Body of pancreas (tissue), 4 donors: ENCODE measurements at regions of chr10 and their contacts with region 1.

Region 1: GRCh38 chr10:95246579-95247051 is 44.2 kb downstream of the PDLIM1 start:
- DNase-seq: peak; percentile 72 to 85 (median 78)
- ATAC-seq: peak; percentile 54
- H3K4me3 ChIP-seq: no peak overlapping the region
- H3K27ac ChIP-seq: peak overlapping the region in 2 of 4 donors; percentile 15 to 41
- H3K4me1 ChIP-seq: peaks cover 17% of the 10 kb centered on the region
- H3K27me3 ChIP-seq: no peaks in the 10 kb centered on the region
- CTCF ChIP-seq: peak; percentile 60 to 79 (median 74)
- POLR2A ChIP-seq: no peak

Region 2: DNA sequence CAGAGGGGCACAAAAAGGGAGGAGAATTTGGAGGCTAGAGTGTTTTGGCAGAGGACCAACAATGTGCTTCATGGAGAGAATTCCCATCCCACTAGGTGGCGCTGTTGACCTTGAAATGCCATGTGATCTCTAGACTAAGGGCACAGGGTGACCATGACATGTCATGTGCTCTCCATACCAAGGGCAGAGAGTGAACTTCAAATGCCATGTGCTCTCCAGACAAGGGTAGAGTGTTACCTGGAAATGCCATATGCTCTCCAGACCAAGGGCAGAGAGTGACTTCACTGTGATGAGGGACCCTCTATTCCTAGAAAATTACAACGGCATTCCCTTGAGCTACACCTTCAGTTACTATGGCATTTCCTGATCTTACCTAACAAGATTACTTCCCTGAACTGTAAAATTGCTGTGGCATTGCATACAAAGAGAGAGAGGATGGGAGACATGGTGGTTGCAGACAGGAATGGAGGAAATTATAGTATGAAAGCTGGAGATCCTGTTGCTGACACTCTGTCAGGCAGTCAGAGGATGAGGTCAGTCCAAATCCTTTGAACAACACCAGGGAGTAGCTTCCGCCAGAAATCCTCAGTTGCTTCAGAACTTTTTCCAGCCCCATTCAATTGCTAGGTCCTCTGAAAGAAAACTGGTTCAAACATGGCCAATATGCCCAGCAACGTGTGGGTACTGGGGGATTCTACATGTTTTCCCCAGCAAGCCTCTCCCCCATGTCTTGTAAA is 113.4 kb before region 1 on chr10:
- intact Hi-C with region 1: loop called (anchors 10 kb)
- DNase-seq: peak; percentile 88 to 92 (median 91)
- ATAC-seq: peak; percentile 96
- H3K4me3 ChIP-seq: no peak overlapping the region
- H3K27ac ChIP-seq: no peak overlapping the region
- H3K4me1 ChIP-seq: peaks cover 10% of the 10 kb centered on the region
- H3K27me3 ChIP-seq: no peaks in the 10 kb centered on the region
- CTCF ChIP-seq: peak; percentile 59 to 96 (median 91)
- POLR2A ChIP-seq: no peak

Region 3: GRCh38 chr10:95183271-95184230 is 63.1 kb before region 1 on chr10:
- intact Hi-C with region 1: loop called (anchors 10 kb)
- DNase-seq: peak; percentile 91 to 96 (median 91)
- ATAC-seq: peak; percentile 95
- H3K4me3 ChIP-seq: peak overlapping the region; percentile 9 to 30
- H3K27ac ChIP-seq: peak overlapping the region; percentile 76 to 99 (median 96)
- H3K4me1 ChIP-seq: peaks cover 24% of the 10 kb centered on the region
- H3K27me3 ChIP-seq: no peaks in the 10 kb centered on the region
- CTCF ChIP-seq: peak; percentile 89 to 99 (median 98)
- POLR2A ChIP-seq: peak; percentile 80 to 96 (median 90)

Region 4: GRCh38 chr10:95363303-95363912 is 116.8 kb after region 1 on chr10:
- intact Hi-C with region 1: loop called (anchors 5 kb)
- DNase-seq: peak; percentile 55 to 71 (median 58)
- ATAC-seq: peak; percentile 81
- H3K4me3 ChIP-seq: no peak overlapping the region
- H3K27ac ChIP-seq: no peak overlapping the region
- H3K4me1 ChIP-seq: peaks cover 10% of the 10 kb centered on the region
- H3K27me3 ChIP-seq: no peaks in the 10 kb centered on the region
- CTCF ChIP-seq: peak; percentile 73 to 91 (median 89)
- POLR2A ChIP-seq: no peak

Region 5: GRCh38 chr10:95474228-95475002 is 227.8 kb after region 1 on chr10:
- intact Hi-C with region 1: no loop called
- DNase-seq: peak in 3 of 4 donors; percentile 24 to 59 (median 27)
- ATAC-seq: peak; percentile 65
- H3K4me3 ChIP-seq: no peak overlapping the region
- H3K27ac ChIP-seq: peak overlapping the region; percentile 58 to 88 (median 80)
- H3K4me1 ChIP-seq: peaks cover 65% of the 10 kb centered on the region
- H3K27me3 ChIP-seq: no peaks in the 10 kb centered on the region
- CTCF ChIP-seq: peak in 3 of 7 experiments; percentile 17 to 35 (median 19)
- POLR2A ChIP-seq: no peak